ENCODE measurements at regions of chr19 and their contacts with region 1.

Region 1: GRCh38 chr19:51703575-51704515 is 10.7 kb downstream of the SPACA6 start:
- DNase-seq: peak; percentile 97
- ATAC-seq: peak; percentile 96
- H3K4me3 Mint-ChIP-seq: peak overlapping the region; percentile 90
- H3K27ac Mint-ChIP-seq: peak overlapping the region; percentile 86
- H3K4me1 Mint-ChIP-seq: peaks cover 26% of the 10 kb centered on the region
- H3K27me3 Mint-ChIP-seq: peaks cover 7% of the 10 kb centered on the region

Region 2: DNA sequence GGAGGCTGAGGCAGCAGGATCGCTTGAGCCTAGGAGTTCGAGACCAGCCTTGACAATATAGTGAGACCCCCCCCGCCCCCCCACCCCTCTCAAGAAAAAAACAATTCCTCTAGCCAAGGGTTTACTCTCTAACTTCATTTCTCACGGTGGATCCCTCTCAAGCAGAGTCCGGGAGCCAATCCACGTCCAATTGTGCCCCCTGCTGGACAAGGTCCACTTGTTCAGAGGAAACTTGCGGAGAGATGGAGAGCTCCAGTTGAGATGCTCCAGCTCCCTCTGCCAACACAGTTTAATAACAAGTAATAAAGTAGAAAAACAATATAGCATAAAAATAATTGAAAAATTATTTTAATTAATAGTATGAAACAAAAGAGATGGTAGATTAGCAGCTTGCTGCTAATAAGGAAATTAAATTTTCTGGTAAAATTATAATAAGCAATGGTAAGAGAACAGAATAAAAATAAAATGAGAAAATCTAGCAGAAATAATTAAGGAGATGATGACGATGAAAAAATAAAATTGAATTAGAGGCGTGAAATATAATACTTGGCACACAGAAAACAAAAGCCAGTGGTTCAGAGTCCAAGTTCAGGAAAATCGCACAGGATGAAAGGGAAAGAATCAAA is 42.8 kb before region 1 on chr19:
- CTCF ChIA-PET with region 1: interaction called, 10 read pairs
- POLR2A ChIA-PET with region 1: no interaction called
- DNase-seq: peak; percentile 76
- ATAC-seq: peak; percentile 61
- H3K4me3 Mint-ChIP-seq: no peak overlapping the region
- H3K27ac Mint-ChIP-seq: no peak overlapping the region
- H3K4me1 Mint-ChIP-seq: peaks cover 4% of the 10 kb centered on the region
- H3K27me3 Mint-ChIP-seq: peaks cover 19% of the 10 kb centered on the region

Region 3: GRCh38 chr19:51735759-51736449 is 32.1 kb after region 1 on chr19:
- CTCF ChIA-PET with region 1: no interaction called
- POLR2A ChIA-PET with region 1: no interaction called
- DNase-seq: no peak
- ATAC-seq: no peak
- H3K4me3 Mint-ChIP-seq: no peak overlapping the region
- H3K27ac Mint-ChIP-seq: no peak overlapping the region
- H3K4me1 Mint-ChIP-seq: no peaks in the 10 kb centered on the region
- H3K27me3 Mint-ChIP-seq: peaks cover 7% of the 10 kb centered on the region

Measured in activated CD8-positive, alpha-beta T cell treated with anti-CD3 and anti-CD28 coated beads, Interleukin-2, amount 10 ng/mL, durations not matched to agents 7 days and 5 days (primary cell).